ENCODE measurements at regions of chr16 and their contacts with region 1.

Region 1: DNA sequence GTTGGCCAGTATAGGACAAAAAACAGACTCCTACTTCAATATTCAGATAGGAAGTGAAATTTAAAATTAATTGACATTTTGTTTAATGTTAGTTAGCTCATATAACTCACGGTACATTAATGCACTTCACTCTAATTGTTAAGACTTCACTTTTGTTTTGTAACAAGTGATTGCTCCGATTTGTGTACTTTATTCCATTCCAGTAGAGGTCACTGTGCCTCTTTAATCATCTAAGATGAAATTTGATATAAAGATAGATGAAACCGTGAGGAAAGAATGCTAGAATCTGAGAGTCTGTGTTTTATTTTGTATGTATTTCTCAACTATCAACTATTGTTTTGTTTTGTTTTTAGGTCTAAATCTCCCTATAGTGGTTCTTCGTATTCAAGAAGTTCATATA is 29.0 kb downstream of the RBBP6 start:
- DNase-seq: no peak
- H3K4me3 ChIP-seq: no peak overlapping the region
- H3K27ac ChIP-seq: no peak overlapping the region
- H3K4me1 ChIP-seq: no peaks in the 10 kb centered on the region
- H3K27me3 ChIP-seq: no peaks in the 10 kb centered on the region
- CTCF ChIP-seq: peak in 2 of 4 experiments; percentile 13 to 45
- POLR2A ChIP-seq: no peak

Region 2: GRCh38 chr16:24508614-24509013 is 59.8 kb before region 1 on chr16:
- intact Hi-C with region 1: no loop called
- DNase-seq: no peak
- H3K4me3 ChIP-seq: no peak overlapping the region
- H3K27ac ChIP-seq: no peak overlapping the region
- H3K4me1 ChIP-seq: no peaks in the 10 kb centered on the region
- H3K27me3 ChIP-seq: no peaks in the 10 kb centered on the region
- CTCF ChIP-seq: no peak
- POLR2A ChIP-seq: no peak

Region 3: GRCh38 chr16:25014500-25015147 is 446.2 kb after region 1 on chr16:
- intact Hi-C with region 1: loop called (anchors 10 kb)
- DNase-seq: peak; percentile 33
- H3K4me3 ChIP-seq: peak overlapping the region; percentile 88 to 91
- H3K27ac ChIP-seq: peak overlapping the region; percentile 86 to 94
- H3K4me1 ChIP-seq: peaks cover 9% of the 10 kb centered on the region
- H3K27me3 ChIP-seq: no peaks in the 10 kb centered on the region
- CTCF ChIP-seq: no peak
- POLR2A ChIP-seq: no peak